Activated CD8-positive, alpha-beta T cell treated with anti-CD3 and anti-CD28 coated beads, Interleukin-2, amount 10 ng/mL, durations not matched to agents 7 days and 5 days (primary cell): ENCODE measurements at regions of chr11 and their contacts with region 1.

Region 1: DNA sequence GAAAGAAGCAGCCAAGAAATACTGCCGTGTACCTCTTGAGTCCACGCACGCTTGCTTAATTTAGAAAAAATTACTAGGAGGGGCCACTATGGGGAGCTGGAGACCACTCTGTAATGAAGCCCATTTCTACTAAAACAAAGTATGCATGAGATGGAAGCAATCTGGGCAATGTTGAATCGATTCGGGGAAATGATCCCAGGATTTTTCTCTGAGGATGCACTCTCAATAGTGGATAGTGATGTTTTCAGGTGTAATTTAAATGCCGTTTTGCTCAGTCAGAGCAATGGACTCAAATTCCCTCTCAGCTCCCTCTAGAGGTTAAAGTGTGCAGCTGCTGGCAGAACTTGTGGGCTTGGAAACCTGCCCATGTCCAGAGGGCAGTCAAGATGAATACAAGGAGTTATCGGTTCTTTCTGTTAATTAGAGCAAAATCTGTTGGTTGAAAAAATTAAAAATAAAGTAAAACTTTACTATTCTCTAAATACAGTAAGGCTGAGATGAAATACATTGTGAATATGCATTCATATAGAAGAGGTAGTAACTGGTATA is 64.1 kb downstream of the ME3 start:
- DNase-seq: peak; percentile 57
- ATAC-seq: peak; percentile 76
- H3K4me3 Mint-ChIP-seq: no peak overlapping the region
- H3K27ac Mint-ChIP-seq: no peak overlapping the region
- H3K4me1 Mint-ChIP-seq: no peaks in the 10 kb centered on the region
- H3K27me3 Mint-ChIP-seq: peaks cover 11% of the 10 kb centered on the region

Region 2: DNA sequence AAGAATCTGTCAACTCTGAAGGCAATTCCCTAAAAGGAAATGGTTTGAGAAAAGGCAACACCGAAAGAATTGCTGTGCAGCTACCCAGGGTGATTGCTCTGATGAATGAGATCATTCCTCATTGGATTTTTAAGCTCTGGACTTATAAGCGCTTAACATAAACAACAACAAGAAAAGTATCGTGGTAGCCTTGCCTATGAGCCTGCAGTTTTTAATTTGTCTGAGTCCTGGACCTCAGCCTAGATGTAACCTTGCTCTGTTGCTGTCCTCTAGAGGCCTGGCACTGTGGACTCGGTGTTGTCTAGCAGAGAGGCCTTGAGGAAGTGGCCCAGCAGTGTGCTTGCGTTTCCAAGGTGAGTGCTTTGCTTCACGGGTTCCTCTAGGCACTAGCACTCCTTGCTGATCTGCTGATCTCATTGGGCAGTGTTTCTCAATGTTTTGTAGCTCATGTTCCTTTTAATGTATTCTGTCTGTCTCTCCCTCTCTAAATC is 213.2 kb before region 1 on chr11:
- CTCF ChIA-PET with region 1: no interaction called
- POLR2A ChIA-PET with region 1: no interaction called
- DNase-seq: no peak
- ATAC-seq: no peak
- H3K4me3 Mint-ChIP-seq: no peak overlapping the region
- H3K27ac Mint-ChIP-seq: no peak overlapping the region
- H3K4me1 Mint-ChIP-seq: peaks cover 7% of the 10 kb centered on the region
- H3K27me3 Mint-ChIP-seq: no peaks in the 10 kb centered on the region

Region 3: GRCh38 chr11:86447763-86448480 is 160.4 kb before region 1 on chr11:
- CTCF ChIA-PET with region 1: interaction called, 45 read pairs
- POLR2A ChIA-PET with region 1: interaction called, 3 read pairs
- DNase-seq: peak; percentile 71
- ATAC-seq: peak; percentile 83
- H3K4me3 Mint-ChIP-seq: no peak overlapping the region
- H3K27ac Mint-ChIP-seq: peak overlapping the region; percentile 81
- H3K4me1 Mint-ChIP-seq: peaks cover 23% of the 10 kb centered on the region
- H3K27me3 Mint-ChIP-seq: no peaks in the 10 kb centered on the region

Region 4: GRCh38 chr11:86551286-86552092 is 56.8 kb before region 1 on chr11:
- CTCF ChIA-PET with region 1: no interaction called
- POLR2A ChIA-PET with region 1: no interaction called
- DNase-seq: no peak
- ATAC-seq: no peak
- H3K4me3 Mint-ChIP-seq: no peak overlapping the region
- H3K27ac Mint-ChIP-seq: no peak overlapping the region
- H3K4me1 Mint-ChIP-seq: no peaks in the 10 kb centered on the region
- H3K27me3 Mint-ChIP-seq: no peaks in the 10 kb centered on the region

Region 5: GRCh38 chr11:86587264-86588193 is 20.8 kb before region 1 on chr11:
- CTCF ChIA-PET with region 1: interaction called, 18 read pairs
- POLR2A ChIA-PET with region 1: no interaction called
- DNase-seq: no peak
- ATAC-seq: no peak
- H3K4me3 Mint-ChIP-seq: no peak overlapping the region
- H3K27ac Mint-ChIP-seq: no peak overlapping the region
- H3K4me1 Mint-ChIP-seq: peaks cover 6% of the 10 kb centered on the region
- H3K27me3 Mint-ChIP-seq: peaks cover 1% of the 10 kb centered on the region

Region 6: DNA sequence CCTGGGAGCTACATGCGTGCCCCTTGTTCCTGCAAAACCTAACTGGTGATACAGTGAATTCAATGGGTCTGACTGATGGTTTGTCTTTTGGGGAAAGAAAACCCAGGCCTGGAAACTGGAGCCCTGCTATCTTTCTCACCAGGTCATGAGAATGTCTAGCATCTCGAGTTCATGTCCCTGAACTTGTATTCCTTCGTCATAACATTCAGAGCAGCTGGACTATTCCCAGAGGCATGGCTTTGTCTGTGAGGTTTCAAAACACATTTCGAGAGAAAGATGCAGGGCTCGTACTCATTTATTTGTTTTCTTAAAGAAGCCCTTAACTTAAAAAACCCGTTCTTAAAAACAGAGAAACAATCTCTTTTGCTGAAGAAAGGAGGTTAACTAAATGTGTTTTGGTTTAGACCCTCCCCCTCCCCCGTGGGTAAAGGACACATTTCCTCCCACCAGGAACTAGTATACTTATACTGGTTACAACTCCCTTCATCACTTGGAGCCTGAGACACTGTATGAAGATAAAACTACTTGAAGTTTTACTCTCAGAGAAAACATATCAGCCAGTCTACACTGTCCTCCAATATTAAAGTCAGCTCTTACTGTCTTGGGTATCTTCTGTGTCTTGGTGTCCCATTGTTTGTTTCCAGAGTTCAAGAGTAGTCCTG is 20.9 kb after region 1 on chr11:
- CTCF ChIA-PET with region 1: interaction called, 11 read pairs
- POLR2A ChIA-PET with region 1: no interaction called
- DNase-seq: no peak
- ATAC-seq: no peak
- H3K4me3 Mint-ChIP-seq: no peak overlapping the region
- H3K27ac Mint-ChIP-seq: no peak overlapping the region
- H3K4me1 Mint-ChIP-seq: peaks cover 3% of the 10 kb centered on the region
- H3K27me3 Mint-ChIP-seq: peaks cover 14% of the 10 kb centered on the region

Region 7: GRCh38 chr11:86811637-86812321 is 203.5 kb after region 1 on chr11:
- CTCF ChIA-PET with region 1: interaction called, 15 read pairs
- POLR2A ChIA-PET with region 1: no interaction called
- DNase-seq: no peak
- ATAC-seq: no peak
- H3K4me3 Mint-ChIP-seq: no peak overlapping the region
- H3K27ac Mint-ChIP-seq: no peak overlapping the region
- H3K4me1 Mint-ChIP-seq: peaks cover 2% of the 10 kb centered on the region
- H3K27me3 Mint-ChIP-seq: peaks cover 32% of the 10 kb centered on the region